Tibial artery (tissue), 4 donors: ENCODE measurements at regions of chr10 and their contacts with region 1.

Region 1: DNA sequence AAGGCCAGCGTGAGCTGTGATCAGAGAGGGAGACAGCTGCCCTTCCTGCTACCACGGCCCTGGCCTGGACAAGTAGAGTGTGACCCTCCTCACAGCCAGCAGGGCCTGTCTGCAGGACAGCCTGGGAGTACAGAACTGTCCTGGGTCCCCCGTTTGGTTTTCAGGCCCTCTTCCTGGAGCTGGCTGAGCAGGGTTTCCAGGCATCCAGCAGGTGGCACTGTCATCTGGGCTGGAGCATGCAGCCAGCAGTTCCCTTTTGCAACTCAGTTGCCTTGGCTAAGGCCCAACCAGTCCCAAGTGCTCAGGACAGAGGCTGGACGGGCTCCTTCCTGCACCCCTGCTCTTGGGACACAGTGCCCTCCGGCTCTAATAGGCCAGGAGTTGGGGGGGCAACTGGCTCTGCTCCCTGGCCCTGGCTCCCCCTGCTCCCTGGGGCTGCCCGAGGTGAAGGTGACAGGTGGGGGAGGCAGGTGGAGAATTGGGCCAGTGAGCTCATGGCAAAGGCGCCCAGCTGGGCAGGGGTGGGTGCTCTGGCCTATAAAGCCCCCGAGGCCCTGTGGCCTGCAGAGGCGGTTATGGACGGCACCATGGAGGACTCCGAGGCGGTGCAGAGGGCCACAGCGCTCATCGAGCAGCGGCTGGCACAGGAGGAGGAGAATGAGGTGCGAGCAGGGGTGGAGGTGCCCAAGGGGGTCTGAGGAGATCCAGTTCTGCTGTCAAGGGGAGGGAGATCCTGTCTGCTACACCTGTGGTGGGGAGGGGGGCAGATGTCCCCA is at the start of gene ANKRD2:
- DNase-seq: peak; percentile 80 to 89
- H3K4me3 ChIP-seq: no peak within 1 kb of the TSS
- H3K27ac ChIP-seq: no peak within 1 kb of the TSS
- H3K4me1 ChIP-seq: peaks cover 0 to 41% (median 28%) of the 10 kb centered on the region in 4 donors
- H3K27me3 ChIP-seq: no peaks in the 10 kb centered on the region
- CTCF ChIP-seq: peak; percentile 93 to 94

Region 2: GRCh38 chr10:97612386-97612785 is 40.0 kb after region 1 on chr10:
- intact Hi-C with region 1: loop called (anchors 1 kb)
- DNase-seq: no peak
- H3K4me3 ChIP-seq: no peak overlapping the region
- H3K27ac ChIP-seq: no peak overlapping the region
- H3K4me1 ChIP-seq: peaks cover 0 to 31% (median 16%) of the 10 kb centered on the region in 4 donors
- H3K27me3 ChIP-seq: no peaks in the 10 kb centered on the region
- CTCF ChIP-seq: peak; percentile 53 to 78